B cell (primary cell): ENCODE measurements at regions of chr12 and their contacts with region 1.

Region 1: GRCh38 chr12:49763006-49763591 is 21.7 kb downstream of the TMBIM6 start:
- DNase-seq: peak; percentile 81
- ATAC-seq: peak; percentile 85
- H3K4me3 ChIP-seq: no peak overlapping the region
- H3K4me3 Mint-ChIP-seq: no peak overlapping the region
- H3K27ac ChIP-seq: peak overlapping the region in 1 of 2 donors; percentile 50
- H3K27ac Mint-ChIP-seq: peak overlapping the region; percentile 26
- H3K4me1 ChIP-seq: peaks cover 12 to 14% of the 10 kb centered on the region in 2 donors
- H3K4me1 Mint-ChIP-seq: peaks cover 22% of the 10 kb centered on the region
- H3K27me3 ChIP-seq: no peaks in the 10 kb centered on the region
- H3K27me3 Mint-ChIP-seq: no peaks in the 10 kb centered on the region
- CTCF ChIP-seq: peak; percentile 89

Region 2: GRCh38 chr12:49636979-49637755 is 125.9 kb before region 1 on chr12:
- CTCF ChIA-PET with region 1: interaction called, 20 read pairs
- POLR2A ChIA-PET with region 1: no interaction called
- intact Hi-C with region 1: no loop called
- DNase-seq: peak; percentile 67
- ATAC-seq: peak; percentile 92
- H3K4me3 ChIP-seq: no peak overlapping the region
- H3K4me3 Mint-ChIP-seq: no peak overlapping the region
- H3K27ac ChIP-seq: no peak overlapping the region
- H3K27ac Mint-ChIP-seq: peak overlapping the region; percentile 67
- H3K4me1 ChIP-seq: peaks cover 13 to 18% of the 10 kb centered on the region in 2 donors
- H3K4me1 Mint-ChIP-seq: peaks cover 21% of the 10 kb centered on the region
- H3K27me3 ChIP-seq: no peaks in the 10 kb centered on the region
- H3K27me3 Mint-ChIP-seq: no peaks in the 10 kb centered on the region
- CTCF ChIP-seq: peak; percentile 77

Region 3: GRCh38 chr12:49750027-49750995 is 12.8 kb before region 1 on chr12:
- CTCF ChIA-PET with region 1: interaction called, 25 read pairs
- POLR2A ChIA-PET with region 1: interaction called, 6 read pairs
- intact Hi-C with region 1: no loop called
- DNase-seq: no peak
- ATAC-seq: no peak
- H3K4me3 ChIP-seq: no peak overlapping the region
- H3K4me3 Mint-ChIP-seq: peak overlapping the region; percentile 11
- H3K27ac ChIP-seq: peak overlapping the region in 1 of 2 donors; percentile 44
- H3K27ac Mint-ChIP-seq: peak overlapping the region; percentile 43
- H3K4me1 ChIP-seq: peaks cover 33 to 54% of the 10 kb centered on the region in 2 donors
- H3K4me1 Mint-ChIP-seq: peaks cover 81% of the 10 kb centered on the region
- H3K27me3 ChIP-seq: no peaks in the 10 kb centered on the region
- H3K27me3 Mint-ChIP-seq: no peaks in the 10 kb centered on the region
- CTCF ChIP-seq: no peak